ENCODE measurements at regions of chr9 and their contacts with region 1.

Region 1: DNA sequence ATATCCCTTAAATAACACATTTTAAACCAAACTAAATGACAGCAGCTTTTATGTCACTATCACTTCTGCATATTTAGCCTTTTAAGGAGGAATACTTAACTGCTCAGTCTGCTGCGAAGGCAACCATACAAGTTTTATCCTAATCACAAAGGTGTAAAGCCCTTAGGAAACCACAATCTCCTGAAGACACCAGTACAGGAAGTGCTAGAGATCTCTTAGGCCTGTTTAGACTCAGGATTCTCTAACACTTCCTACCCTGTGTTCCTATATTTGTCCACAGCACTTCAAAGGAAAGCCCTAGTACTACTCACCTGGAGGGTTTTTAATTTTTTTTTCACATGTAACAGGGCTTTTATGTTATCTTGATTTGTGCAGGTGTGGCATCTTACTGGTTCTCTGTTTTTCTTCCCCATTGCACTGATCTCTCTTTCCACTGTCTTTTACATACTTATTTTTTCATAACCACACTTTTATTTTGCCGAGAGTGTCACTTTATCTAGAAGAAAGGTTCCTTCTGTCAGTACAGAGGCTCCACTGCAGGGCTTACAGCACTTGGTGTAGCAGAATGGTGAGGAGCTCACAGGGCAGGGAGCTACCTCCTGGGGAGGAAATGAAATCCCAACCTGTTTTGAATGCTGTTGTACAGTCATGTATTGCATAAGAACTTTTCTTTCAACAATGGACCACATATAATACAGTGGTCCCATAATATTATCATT is 1060.6 kb upstream of the ACO1 start:
- DNase-seq: peak in 6 of 9 donors; percentile 35 to 69 (median 55)
- ATAC-seq: peak; percentile 73
- H3K4me3 ChIP-seq: peak overlapping the region; percentile 7
- H3K4me3 Mint-ChIP-seq: peak overlapping the region in 9 of 10 donors; percentile 18 to 72 (median 57)
- H3K27ac ChIP-seq: peak overlapping the region; percentile 49
- H3K27ac Mint-ChIP-seq: peak overlapping the region; percentile 30 to 95 (median 78)
- H3K4me1 ChIP-seq: peaks cover 18 to 32% of the 10 kb centered on the region in 2 donors
- H3K4me1 Mint-ChIP-seq: peaks cover 10 to 53% (median 47%) of the 10 kb centered on the region in 7 donors
- H3K27me3 ChIP-seq: no peaks in the 10 kb centered on the region
- H3K27me3 Mint-ChIP-seq: no peaks in the 10 kb centered on the region

Region 2: DNA sequence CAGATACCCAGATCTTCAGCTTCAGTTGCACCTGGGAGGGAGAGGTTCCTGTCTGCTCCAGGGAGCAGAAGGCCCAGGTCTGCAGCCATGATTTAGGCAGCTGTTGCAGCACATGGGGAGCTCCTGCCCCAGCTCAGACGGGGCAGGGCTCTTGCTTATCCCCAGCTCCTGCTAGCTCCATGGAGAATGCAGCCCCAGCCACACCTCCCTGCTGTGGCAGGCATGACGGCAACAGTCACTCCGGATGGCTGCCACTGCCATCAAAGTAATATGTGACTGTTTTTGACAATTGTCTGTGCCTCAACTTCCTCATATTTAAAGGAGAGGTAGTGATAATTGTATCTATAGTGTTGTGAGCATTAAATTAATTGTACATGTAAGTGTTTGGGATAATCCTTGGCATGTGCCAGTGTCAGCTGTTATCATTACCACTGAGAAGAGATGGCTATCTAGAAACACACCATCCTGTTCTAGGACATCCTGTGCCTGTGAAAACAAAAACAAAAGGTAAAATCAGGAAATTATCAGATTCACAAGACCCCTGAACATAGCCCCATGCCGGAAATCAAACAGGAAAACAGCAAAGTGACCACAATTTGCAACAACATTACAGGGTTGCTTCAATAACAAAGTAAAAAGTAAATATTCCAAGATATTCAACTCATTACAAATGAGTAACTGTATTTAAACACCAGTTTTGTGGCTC is 11.8 kb after region 1 on chr9:
- CTCF ChIA-PET with region 1: interaction called, 4 read pairs
- POLR2A ChIA-PET with region 1: interaction called, 11 read pairs
- intact Hi-C with region 1: loop called in 1 of 2 experiments (anchors 1 kb)
- DNase-seq: peak in 1 of 9 donors; percentile 17
- ATAC-seq: no peak
- H3K4me3 ChIP-seq: peak overlapping the region; percentile 12
- H3K4me3 Mint-ChIP-seq: peak overlapping the region; percentile 3 to 71 (median 55)
- H3K27ac ChIP-seq: no peak overlapping the region
- H3K27ac Mint-ChIP-seq: peak overlapping the region in 6 of 9 donors; percentile 34 to 92 (median 59)
- H3K4me1 ChIP-seq: peaks cover 23 to 26% of the 10 kb centered on the region in 2 donors
- H3K4me1 Mint-ChIP-seq: peaks cover 6 to 28% (median 20%) of the 10 kb centered on the region in 7 donors
- H3K27me3 ChIP-seq: no peaks in the 10 kb centered on the region
- H3K27me3 Mint-ChIP-seq: peaks cover 0 to 3% (median 0%) of the 10 kb centered on the region in 5 donors

Region 3: DNA sequence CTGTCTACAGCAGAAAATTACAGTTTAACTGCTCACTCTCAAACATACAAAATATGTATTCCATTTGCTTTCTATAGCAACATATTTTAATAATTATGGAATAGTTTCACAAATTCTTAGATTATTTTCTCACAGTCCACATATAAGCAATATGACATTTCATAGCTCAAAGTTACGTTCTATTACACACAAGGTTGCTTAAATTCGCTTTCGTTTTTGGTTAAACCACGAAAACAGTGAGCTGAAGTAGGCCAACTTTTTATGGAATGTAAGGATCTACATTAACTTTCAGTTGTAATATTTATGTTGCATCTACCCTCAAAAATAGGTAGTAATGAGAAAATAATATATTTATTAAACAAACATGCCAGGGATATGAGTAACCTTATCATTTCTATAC is 94.5 kb after region 1 on chr9:
- CTCF ChIA-PET with region 1: no interaction called
- POLR2A ChIA-PET with region 1: no interaction called
- intact Hi-C with region 1: loop called in 1 of 2 experiments (anchors 5 kb)
- DNase-seq: no peak
- ATAC-seq: no peak
- H3K4me3 ChIP-seq: no peak overlapping the region
- H3K4me3 Mint-ChIP-seq: no peak overlapping the region
- H3K27ac ChIP-seq: no peak overlapping the region
- H3K27ac Mint-ChIP-seq: no peak overlapping the region
- H3K4me1 ChIP-seq: no peaks in the 10 kb centered on the region
- H3K4me1 Mint-ChIP-seq: peaks cover 0 to 10% (median 5%) of the 10 kb centered on the region in 7 donors
- H3K27me3 ChIP-seq: no peaks in the 10 kb centered on the region
- H3K27me3 Mint-ChIP-seq: no peaks in the 10 kb centered on the region

Region 4: GRCh38 chr9:31542384-31543055 is 218.6 kb after region 1 on chr9:
- CTCF ChIA-PET with region 1: no interaction called
- POLR2A ChIA-PET with region 1: no interaction called
- intact Hi-C with region 1: loop called in 1 of 2 experiments (anchors 5 kb)
- DNase-seq: peak in 5 of 9 donors; percentile 3 to 25 (median 18)
- ATAC-seq: peak; percentile 79
- H3K4me3 ChIP-seq: no peak overlapping the region
- H3K4me3 Mint-ChIP-seq: no peak overlapping the region
- H3K27ac ChIP-seq: no peak overlapping the region
- H3K27ac Mint-ChIP-seq: peak overlapping the region in 1 of 9 donors; percentile 1
- H3K4me1 ChIP-seq: peaks cover 0 to 6% of the 10 kb centered on the region in 2 donors
- H3K4me1 Mint-ChIP-seq: peaks cover 0 to 14% (median 6%) of the 10 kb centered on the region in 7 donors
- H3K27me3 ChIP-seq: no peaks in the 10 kb centered on the region
- H3K27me3 Mint-ChIP-seq: no peaks in the 10 kb centered on the region

Region 5: GRCh38 chr9:31799953-31800609 is 476.2 kb after region 1 on chr9:
- CTCF ChIA-PET with region 1: no interaction called
- POLR2A ChIA-PET with region 1: no interaction called
- intact Hi-C with region 1: loop called in 1 of 2 experiments (anchors 5 kb)
- DNase-seq: peak in 5 of 9 donors; percentile 6 to 26 (median 11)
- ATAC-seq: no peak
- H3K4me3 ChIP-seq: no peak overlapping the region
- H3K4me3 Mint-ChIP-seq: no peak overlapping the region
- H3K27ac ChIP-seq: no peak overlapping the region
- H3K27ac Mint-ChIP-seq: peak overlapping the region in 2 of 9 donors; percentile 11 to 27
- H3K4me1 ChIP-seq: no peaks in the 10 kb centered on the region
- H3K4me1 Mint-ChIP-seq: peaks cover 0 to 19% (median 0%) of the 10 kb centered on the region in 7 donors
- H3K27me3 ChIP-seq: no peaks in the 10 kb centered on the region
- H3K27me3 Mint-ChIP-seq: no peaks in the 10 kb centered on the region

Measured in naive thymus-derived CD4-positive, alpha-beta T cell (primary cell).